Gastrocnemius medialis (tissue), 4 donors: ENCODE measurements at regions of chr3 and their contacts with region 1.

Region 1: DNA sequence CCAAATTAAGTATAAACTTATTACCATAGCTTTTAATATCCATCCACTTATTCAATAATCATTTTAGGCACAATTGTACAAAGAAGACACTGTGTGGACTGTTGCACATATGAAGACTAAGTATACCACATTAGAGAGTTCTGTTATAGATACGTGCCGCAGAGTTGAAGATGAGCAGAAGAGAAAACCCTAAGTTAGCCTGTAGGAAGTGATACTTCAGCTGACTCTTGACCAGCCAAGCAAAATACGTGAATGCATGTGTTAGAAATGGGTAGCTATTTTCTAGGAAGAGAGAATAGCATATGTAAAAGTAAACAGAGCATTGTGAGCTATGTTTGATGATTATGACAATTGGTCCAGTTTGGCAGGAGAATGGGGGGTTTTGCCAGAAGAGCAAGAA is 272.0 kb upstream of the ATP11B start:
- DNase-seq: no peak
- ATAC-seq: no peak
- H3K4me3 ChIP-seq: no peak overlapping the region
- H3K27ac ChIP-seq: no peak overlapping the region
- H3K4me1 ChIP-seq: no peaks in the 10 kb centered on the region
- H3K27me3 ChIP-seq: no peaks in the 10 kb centered on the region
- CTCF ChIP-seq: no peak
- POLR2A ChIP-seq: no peak

Region 2: GRCh38 chr3:182492536-182492935 is 28.8 kb before region 1 on chr3:
- in situ Hi-C with region 1: no loop called
- intact Hi-C with region 1: loop called (anchors 1 kb)
- DNase-seq: no peak
- ATAC-seq: no peak
- H3K4me3 ChIP-seq: no peak overlapping the region
- H3K27ac ChIP-seq: no peak overlapping the region
- H3K4me1 ChIP-seq: no peaks in the 10 kb centered on the region
- H3K27me3 ChIP-seq: no peaks in the 10 kb centered on the region
- CTCF ChIP-seq: no peak
- POLR2A ChIP-seq: no peak